ENCODE measurements at regions of chrX and their contacts with region 1.

Region 1: DNA sequence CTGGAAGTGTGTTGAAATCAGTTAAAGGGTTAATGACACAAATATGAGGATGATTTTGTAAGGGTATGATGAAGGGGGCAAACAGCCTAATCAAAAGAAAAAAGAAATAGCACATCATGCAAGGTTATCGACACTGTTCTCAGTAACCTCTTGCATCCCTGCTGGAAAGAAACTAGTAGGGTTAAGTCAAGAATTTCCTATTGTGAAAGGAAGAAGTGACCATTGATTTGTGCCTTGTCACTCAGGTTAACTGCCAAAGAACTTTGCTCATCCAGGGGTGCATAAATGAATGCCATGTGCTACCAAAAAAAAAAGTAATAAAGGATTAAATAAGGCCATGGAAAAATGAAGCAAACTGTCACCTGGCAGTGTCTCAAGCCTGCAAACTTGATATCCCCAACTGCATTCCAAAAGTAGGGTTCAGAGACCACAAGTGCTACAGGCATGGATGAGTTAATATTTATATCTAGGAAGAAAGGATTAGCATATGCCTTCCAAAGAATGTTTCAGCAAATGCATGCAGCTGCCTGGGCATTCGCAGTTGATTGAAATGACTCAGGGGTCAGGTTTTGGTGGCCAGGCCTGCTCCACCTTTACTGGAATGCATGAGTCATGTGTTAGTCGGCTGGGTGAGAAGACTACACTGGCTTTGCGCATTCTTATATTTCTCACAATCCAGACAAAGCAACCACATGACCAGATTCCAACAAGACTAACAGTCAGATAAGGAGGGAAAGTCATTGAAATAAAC is 78.4 kb upstream of the ATXN3L start:
- DNase-seq: peak; percentile 100
- H3K4me3 ChIP-seq: no peak overlapping the region
- H3K27ac ChIP-seq: peak overlapping the region; percentile 95
- H3K4me1 ChIP-seq: peaks cover 30% of the 10 kb centered on the region
- H3K27me3 ChIP-seq: no peaks in the 10 kb centered on the region
- CTCF ChIP-seq: no peak

Region 2: GRCh38 chrX:13101441-13102139 is 296.7 kb before region 1 on chrX:
- CTCF ChIA-PET with region 1: no interaction called
- dilution Hi-C with region 1: no loop called
- in situ Hi-C with region 1: no loop called
- intact Hi-C with region 1: loop called (anchors 5 kb)
- DNase-seq: peak; percentile 97
- H3K4me3 ChIP-seq: no peak overlapping the region
- H3K27ac ChIP-seq: peak overlapping the region; percentile 68
- H3K4me1 ChIP-seq: peaks cover 26% of the 10 kb centered on the region
- H3K27me3 ChIP-seq: no peaks in the 10 kb centered on the region
- CTCF ChIP-seq: no peak

Region 3: GRCh38 chrX:13293700-13294099 is 104.5 kb before region 1 on chrX:
- CTCF ChIA-PET with region 1: no interaction called
- dilution Hi-C with region 1: no loop called
- in situ Hi-C with region 1: no loop called
- intact Hi-C with region 1: loop called (anchors 2 kb)
- DNase-seq: peak; percentile 95
- H3K4me3 ChIP-seq: no peak overlapping the region
- H3K27ac ChIP-seq: peak overlapping the region; percentile 93
- H3K4me1 ChIP-seq: peaks cover 11% of the 10 kb centered on the region
- H3K27me3 ChIP-seq: no peaks in the 10 kb centered on the region
- CTCF ChIP-seq: no peak

Region 4: DNA sequence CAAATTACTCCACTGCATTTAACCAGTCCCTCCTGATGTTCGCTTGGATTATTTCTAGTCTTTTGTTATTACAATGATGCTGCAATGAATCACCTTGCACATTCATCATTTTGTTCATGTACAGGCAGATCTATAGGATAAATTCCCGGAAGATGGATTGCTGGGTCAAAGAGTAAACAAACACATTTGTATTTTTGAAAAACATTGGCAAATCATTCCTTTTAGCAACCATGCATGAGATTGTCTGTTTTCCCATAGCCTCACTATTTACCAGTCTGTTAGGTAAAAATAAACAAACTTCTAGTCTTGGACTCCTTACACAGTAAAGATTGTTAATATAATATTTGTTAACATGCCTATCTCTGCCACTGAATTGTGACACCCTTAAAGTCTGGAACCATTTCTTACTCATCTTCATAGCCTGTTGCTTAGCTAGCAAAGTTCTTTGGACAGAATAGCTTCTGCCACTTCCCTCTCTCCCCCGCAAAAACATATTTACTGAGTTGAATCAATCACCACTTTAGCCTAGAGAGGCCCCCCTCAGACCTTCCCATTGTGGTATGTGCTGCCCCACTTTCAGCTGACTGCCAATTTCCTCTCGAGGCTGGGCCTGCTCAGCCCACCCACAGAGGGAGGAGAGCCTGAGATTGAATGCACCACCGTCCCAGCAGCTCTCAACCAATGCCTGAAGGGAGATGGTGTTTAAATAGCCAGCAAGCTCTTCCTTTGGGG is 30.0 kb after region 1 on chrX:
- CTCF ChIA-PET with region 1: interaction called, 3 read pairs
- dilution Hi-C with region 1: no loop called
- in situ Hi-C with region 1: no loop called
- intact Hi-C with region 1: loop called (anchors 1 kb)
- DNase-seq: peak; percentile 92
- H3K4me3 ChIP-seq: no peak overlapping the region
- H3K27ac ChIP-seq: peak overlapping the region; percentile 77
- H3K4me1 ChIP-seq: peaks cover 47% of the 10 kb centered on the region
- H3K27me3 ChIP-seq: no peaks in the 10 kb centered on the region
- CTCF ChIP-seq: no peak